ENCODE measurements at regions of chr4 and their contacts with region 1.

Region 1: DNA sequence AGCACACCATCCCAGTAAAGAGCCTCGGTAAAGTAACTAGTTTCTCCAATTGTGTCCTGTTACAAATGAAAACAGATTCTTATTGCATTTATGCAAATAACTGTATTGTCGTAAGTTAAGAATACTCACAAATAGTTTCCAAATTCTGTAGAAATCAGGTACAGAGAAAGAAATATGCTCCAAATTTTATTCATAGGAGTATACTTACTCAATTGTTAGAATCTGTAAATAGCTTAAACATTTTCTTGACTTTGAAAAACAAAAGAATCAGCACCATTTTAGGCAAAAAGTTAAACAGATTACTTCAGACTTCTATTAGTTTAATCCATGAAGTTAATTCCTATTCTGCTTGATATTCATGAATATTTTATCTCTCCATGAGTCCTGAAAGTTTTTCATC is 10.7 kb downstream of the CNGA1 start:
- DNase-seq: no peak
- CTCF ChIP-seq: no peak

Region 2: GRCh38 chr4:48016141-48017103 is 10.6 kb after region 1 on chr4 and contains the starts of genes CNGA1 and NIPAL1:
- CTCF ChIA-PET with region 1: interaction called, 28 read pairs
- POLR2A ChIA-PET with region 1: no interaction called
- DNase-seq: peak; percentile 88
- CTCF ChIP-seq: peak; percentile 59

Region 3: GRCh38 chr4:48085821-48086607 is 80.2 kb after region 1 on chr4:
- CTCF ChIA-PET with region 1: interaction called, 99 read pairs
- POLR2A ChIA-PET with region 1: no interaction called
- DNase-seq: no peak
- CTCF ChIP-seq: no peak

Region 4: DNA sequence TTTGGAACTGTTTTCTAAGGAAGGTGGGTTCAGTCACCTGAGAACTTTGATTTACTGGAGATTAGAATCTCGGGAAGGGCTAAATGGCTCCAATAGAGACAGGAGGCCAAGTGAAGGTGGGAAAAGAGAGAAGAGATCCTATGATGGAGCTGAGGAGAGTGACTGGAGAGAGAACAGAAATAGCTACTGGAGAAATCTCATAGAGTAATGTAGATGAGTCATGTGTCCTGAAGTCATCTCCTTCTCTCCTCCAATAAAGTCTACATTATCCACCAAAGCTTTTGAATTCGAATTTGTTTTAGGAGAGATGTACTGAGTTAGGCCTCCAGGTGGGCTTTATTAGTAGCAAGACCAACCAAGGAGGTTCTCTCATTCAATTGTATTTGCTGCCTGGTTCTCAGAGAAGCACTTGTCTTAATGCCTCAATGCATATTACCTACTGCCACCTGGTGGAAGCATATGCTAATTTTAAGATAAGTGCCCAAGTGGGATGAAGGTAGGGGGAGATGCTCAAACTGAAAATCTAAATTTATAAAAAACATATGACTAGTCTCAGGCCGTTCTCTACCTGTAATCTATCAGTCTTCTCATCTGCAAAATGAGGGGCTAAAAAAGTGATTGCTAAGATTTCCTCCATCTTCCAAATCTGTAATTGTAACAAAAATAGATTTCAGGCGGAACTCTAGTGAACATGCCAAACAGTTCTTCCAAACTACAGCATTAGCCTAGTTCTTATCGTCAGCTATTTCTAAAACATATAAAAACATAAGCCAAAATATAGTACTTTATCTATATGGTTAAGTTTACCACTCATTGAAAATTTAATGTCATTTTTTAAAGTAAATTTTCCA is 103.9 kb after region 1 on chr4:
- CTCF ChIA-PET with region 1: interaction called, 12 read pairs
- POLR2A ChIA-PET with region 1: no interaction called
- DNase-seq: peak; percentile 46
- CTCF ChIP-seq: peak; percentile 61

Region 5: DNA sequence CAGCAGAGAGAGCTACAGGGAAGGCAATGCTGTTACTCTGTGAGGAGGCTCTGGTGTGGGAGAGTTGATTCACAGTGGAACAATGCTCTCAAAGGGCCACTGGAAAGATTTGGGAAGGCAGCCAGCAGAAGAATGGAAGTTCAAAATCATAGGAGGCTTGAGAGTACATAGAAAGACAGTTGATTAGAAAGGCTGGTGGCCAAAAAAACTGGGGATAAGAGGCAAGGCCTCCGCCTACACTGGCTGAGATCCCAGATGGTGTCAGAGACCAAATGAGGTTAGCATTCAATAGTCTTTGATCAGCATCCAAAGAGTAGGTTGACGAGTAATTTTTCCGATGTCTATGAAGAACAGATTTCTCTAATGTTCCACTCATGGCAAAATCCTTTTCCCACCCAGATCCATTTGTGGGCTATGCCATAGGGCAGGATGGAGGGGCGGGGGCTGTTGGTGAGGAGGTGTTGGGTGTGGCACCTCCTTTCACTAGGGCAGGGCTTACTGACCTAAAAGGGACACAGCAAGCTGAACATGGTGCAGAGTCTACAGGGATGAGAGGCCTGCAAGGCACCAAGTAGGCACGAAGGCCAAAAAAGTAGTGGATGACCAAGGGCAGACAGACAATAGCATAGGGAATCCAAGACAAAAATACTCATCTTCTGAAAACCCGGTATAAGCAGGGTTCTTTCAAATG is 248.7 kb after region 1 on chr4:
- CTCF ChIA-PET with region 1: no interaction called
- POLR2A ChIA-PET with region 1: no interaction called
- DNase-seq: no peak
- CTCF ChIP-seq: no peak